CD8-positive, alpha-beta T cell (primary cell): ENCODE measurements at regions of chr19 and their contacts with region 1.

Region 1: DNA sequence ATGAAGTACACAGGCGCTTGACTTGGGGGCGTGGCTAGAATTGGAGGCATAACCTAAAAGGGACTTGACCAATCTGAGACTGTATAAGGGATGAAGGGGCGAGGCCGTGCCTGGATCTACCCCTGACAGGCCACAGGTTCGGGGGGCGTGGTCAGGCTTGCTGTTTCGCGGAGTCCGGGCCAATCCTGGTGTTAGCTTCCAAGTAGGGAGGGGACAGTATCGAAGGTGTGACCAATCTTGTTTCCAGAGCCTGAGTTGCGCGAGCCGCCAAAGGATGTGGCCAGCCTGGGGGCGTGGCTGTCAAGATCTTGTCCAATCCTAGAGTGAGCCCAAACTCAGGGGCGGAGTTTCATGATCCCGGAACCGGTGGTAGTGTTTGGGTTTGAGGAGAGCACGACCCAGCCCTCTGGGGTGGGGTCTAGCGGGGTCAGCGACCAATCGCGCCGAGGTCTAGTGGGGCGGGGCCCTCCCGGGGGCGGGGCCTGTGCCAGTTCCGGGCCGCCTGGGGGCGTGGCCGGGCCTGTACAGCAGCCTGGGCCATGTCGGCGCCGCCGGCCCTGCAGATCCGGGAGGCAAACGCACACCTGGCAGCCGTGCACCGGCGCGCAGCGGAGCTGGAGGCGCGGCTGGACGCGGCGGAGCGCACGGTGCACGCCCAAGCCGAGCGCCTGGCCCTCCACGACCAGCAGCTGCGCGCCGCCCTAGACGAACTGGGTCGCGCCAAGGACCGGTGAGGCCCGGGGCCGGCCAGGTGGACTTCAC is at the start of gene VMAC:
- DNase-seq: peak; percentile 100
- ATAC-seq: peak; percentile 77
- H3K4me3 ChIP-seq: peak within 1 kb of the TSS; percentile 93 to 100
- H3K4me3 Mint-ChIP-seq: peak within 1 kb of the TSS; percentile 90
- H3K27ac ChIP-seq: peak within 1 kb of the TSS; percentile 90 to 92
- H3K27ac Mint-ChIP-seq: peak within 1 kb of the TSS; percentile 99
- H3K4me1 ChIP-seq: peaks cover 22% of the 10 kb centered on the region
- H3K4me1 Mint-ChIP-seq: peaks cover 31% of the 10 kb centered on the region
- H3K27me3 ChIP-seq: no peaks in the 10 kb centered on the region
- H3K27me3 Mint-ChIP-seq: no peaks in the 10 kb centered on the region
- CTCF ChIP-seq: no peak
- total RNA-seq, gene VMAC: 17.4 to 18.6 TPM

Region 2: DNA sequence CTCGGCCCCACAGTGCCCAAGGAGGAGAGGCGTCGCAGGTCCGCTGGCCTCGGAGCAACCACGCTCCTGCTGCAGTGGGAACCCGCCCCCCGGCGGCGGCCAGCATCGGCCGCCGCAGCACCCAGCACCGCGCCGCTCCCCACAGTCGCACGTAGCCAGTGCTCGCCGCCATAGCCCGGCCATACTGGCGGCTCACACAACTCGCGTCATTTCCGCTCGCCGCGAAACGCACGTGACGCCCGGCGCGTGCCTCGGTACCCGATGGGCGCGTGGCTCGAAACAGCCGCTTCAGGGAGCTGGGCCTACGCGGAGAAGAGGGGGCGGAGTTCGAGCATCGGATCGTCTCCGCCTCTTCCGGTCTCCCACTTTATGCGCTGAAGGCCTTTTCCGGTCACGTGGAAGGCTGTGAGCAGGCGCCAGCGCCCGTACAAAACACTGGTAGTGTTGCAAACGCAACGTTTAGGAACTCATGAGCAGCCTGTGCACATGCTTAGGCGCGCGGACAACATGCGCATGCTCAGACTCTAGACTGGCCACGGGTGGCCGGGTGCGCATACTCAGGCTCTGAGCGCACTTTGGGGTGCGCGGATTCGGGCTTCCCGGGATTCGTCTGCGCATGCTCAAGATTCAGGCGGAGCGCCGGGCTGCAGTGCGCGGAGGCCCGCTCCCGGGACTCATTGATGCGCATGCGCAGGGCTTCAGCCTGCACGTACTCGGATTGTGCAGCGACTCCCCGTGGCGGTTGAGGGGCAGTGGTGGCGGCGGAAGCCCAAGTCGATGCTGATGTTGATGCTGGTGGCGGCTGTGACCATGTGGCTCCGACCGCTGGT is 184.4 kb before region 1 on chr19 and contains the starts of genes CATSPERD and LONP1:
- CTCF ChIA-PET with region 1: no interaction called
- POLR2A ChIA-PET with region 1: no interaction called
- intact Hi-C with region 1: loop called in 1 of 2 experiments (anchors 1 kb)
- DNase-seq: peak; percentile 92 to 100 (median 97)
- ATAC-seq: peak; percentile 86
- H3K4me3 ChIP-seq: peak within 1 kb of the TSS; percentile 91 to 94
- H3K4me3 Mint-ChIP-seq: peak within 1 kb of the TSS; percentile 92
- H3K27ac ChIP-seq: peak within 1 kb of the TSS; percentile 93 to 96
- H3K27ac Mint-ChIP-seq: peak within 1 kb of the TSS; percentile 96
- H3K4me1 ChIP-seq: peaks cover 23% of the 10 kb centered on the region
- H3K4me1 Mint-ChIP-seq: peaks cover 29% of the 10 kb centered on the region
- H3K27me3 ChIP-seq: no peaks in the 10 kb centered on the region
- H3K27me3 Mint-ChIP-seq: no peaks in the 10 kb centered on the region
- CTCF ChIP-seq: peak; percentile 89
- total RNA-seq, gene CATSPERD: not detected
- total RNA-seq, gene LONP1: 90.6 to 109 TPM

Region 3: DNA sequence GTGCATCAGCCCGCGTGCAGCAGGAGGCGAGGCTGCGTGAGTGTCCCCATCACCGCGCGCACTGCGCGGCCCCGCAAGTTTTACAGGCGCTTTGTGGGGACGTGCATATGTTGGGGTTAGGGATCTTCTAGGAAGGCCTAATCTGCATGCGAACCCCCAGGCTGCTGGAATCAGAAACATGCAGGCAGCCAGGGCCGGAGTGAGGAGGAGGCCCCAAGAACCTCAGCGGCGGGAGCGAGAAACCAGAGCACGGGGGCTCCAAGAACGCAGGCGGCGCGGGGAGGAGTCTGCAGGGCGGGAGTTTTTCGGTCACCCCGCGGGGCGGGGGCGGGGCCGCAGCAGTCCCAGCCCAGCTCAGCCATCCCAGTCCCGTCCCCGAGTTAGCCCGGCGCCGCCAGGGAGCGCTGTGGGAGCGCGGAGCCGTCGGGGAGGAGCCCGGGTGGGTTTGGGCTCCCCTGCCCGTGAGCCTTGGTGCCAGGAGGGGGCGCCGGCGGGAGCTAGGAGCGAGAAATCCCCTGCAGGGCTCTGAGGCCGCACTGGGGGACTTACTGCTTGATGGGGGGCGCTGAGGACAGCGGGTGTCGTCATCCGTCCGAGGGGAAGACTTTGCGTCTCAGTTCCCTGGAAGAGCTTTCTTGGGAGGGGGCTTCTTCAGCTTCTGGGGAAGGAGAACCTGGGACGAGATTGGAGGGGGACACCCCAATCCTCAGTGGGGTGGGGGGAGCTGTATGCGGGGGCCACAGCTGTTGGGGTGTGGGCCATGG is 100.6 kb before region 1 on chr19:
- CTCF ChIA-PET with region 1: interaction called, 13 read pairs
- POLR2A ChIA-PET with region 1: interaction called, 8 read pairs
- intact Hi-C with region 1: loop called in 1 of 2 experiments (anchors 1 kb)
- DNase-seq: peak; percentile 80 to 96 (median 92)
- ATAC-seq: peak; percentile 97
- H3K4me3 ChIP-seq: peak overlapping the region; percentile 41 to 61
- H3K4me3 Mint-ChIP-seq: peak overlapping the region; percentile 75
- H3K27ac ChIP-seq: no peak overlapping the region
- H3K27ac Mint-ChIP-seq: no peak overlapping the region
- H3K4me1 ChIP-seq: peaks cover 34% of the 10 kb centered on the region
- H3K4me1 Mint-ChIP-seq: peaks cover 23% of the 10 kb centered on the region
- H3K27me3 ChIP-seq: peaks cover 0 to 35% of the 10 kb centered on the region in 2 experiments
- H3K27me3 Mint-ChIP-seq: peaks cover 18% of the 10 kb centered on the region
- CTCF ChIP-seq: peak; percentile 93

Region 4: GRCh38 chr19:5891938-5892771 is 12.4 kb before region 1 on chr19:
- CTCF ChIA-PET with region 1: interaction called, 5 read pairs
- POLR2A ChIA-PET with region 1: interaction called, 16 read pairs
- intact Hi-C with region 1: no loop called
- DNase-seq: peak in 1 of 9 experiments; percentile 37
- ATAC-seq: peak; percentile 40
- H3K4me3 ChIP-seq: no peak overlapping the region
- H3K4me3 Mint-ChIP-seq: no peak overlapping the region
- H3K27ac ChIP-seq: no peak overlapping the region
- H3K27ac Mint-ChIP-seq: no peak overlapping the region
- H3K4me1 ChIP-seq: peaks cover 9% of the 10 kb centered on the region
- H3K4me1 Mint-ChIP-seq: peaks cover 3% of the 10 kb centered on the region
- H3K27me3 ChIP-seq: no peaks in the 10 kb centered on the region
- H3K27me3 Mint-ChIP-seq: peaks cover 9% of the 10 kb centered on the region
- CTCF ChIP-seq: no peak

Region 5: DNA sequence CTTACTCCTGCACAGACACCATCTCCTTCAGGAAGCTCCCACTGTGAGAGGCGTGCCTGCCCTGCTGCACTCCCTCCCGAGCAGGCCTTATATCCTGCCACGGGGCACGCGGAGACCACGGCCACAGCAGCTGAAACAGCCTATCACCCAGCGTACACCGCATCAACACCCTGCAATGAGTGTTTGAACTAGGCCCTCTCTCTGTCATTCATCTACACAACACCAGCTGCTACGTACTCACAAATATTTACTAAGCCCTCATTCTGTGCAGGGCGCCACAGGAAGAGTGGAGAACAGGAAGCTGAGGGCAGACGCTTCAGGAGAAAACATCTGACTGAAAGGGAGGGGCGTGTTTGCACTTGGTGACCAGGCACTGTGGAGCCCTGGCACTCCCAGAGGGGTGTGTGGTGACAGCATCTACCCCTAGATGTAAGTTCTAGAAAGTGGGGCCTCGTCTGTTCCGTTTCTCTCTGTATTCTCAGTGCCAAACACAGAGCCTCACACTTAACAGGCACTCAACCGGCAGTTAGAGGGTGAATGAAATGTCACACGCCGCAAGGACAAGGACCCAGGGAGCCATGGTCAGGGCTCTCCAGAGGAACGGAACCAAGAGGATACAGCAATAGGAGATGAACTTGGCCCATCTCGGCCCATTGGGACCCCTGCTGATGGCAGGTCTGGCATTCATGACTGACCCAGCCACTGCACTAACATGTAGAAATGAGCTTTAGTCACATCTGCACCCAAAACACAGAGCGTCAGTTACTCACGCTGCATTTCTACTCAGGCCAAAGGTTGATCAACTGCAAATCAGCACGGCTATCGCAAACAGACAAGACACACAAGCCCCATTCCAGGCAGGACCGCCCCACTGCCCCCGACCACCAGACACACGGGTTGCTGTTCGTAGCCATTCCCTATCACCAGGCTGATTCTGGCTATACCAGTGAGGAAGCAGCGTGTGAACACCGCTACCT is 57.7 kb after region 1 on chr19:
- CTCF ChIA-PET with region 1: no interaction called
- POLR2A ChIA-PET with region 1: interaction called, 26 read pairs
- intact Hi-C with region 1: loop called (anchors 1 kb)
- DNase-seq: peak; percentile 62 to 93 (median 81)
- ATAC-seq: peak; percentile 92
- H3K4me3 ChIP-seq: peak overlapping the region; percentile 22 to 29
- H3K4me3 Mint-ChIP-seq: peak overlapping the region; percentile 78
- H3K27ac ChIP-seq: peak overlapping the region; percentile 81 to 89
- H3K27ac Mint-ChIP-seq: peak overlapping the region; percentile 100
- H3K4me1 ChIP-seq: peaks cover 96% of the 10 kb centered on the region
- H3K4me1 Mint-ChIP-seq: peaks cover 91% of the 10 kb centered on the region
- H3K27me3 ChIP-seq: no peaks in the 10 kb centered on the region
- H3K27me3 Mint-ChIP-seq: no peaks in the 10 kb centered on the region
- CTCF ChIP-seq: peak; percentile 23

Region 6: GRCh38 chr19:6460101-6460853 is 555.7 kb after region 1 on chr19:
- CTCF ChIA-PET with region 1: no interaction called
- POLR2A ChIA-PET with region 1: no interaction called
- intact Hi-C with region 1: loop called in 1 of 2 experiments (anchors 5 kb)
- DNase-seq: peak; percentile 93 to 98 (median 96)
- ATAC-seq: peak; percentile 85
- H3K4me3 ChIP-seq: peak overlapping the region; percentile 73 to 87
- H3K4me3 Mint-ChIP-seq: peak overlapping the region; percentile 94
- H3K27ac ChIP-seq: peak overlapping the region; percentile 62 to 69
- H3K27ac Mint-ChIP-seq: peak overlapping the region; percentile 81
- H3K4me1 ChIP-seq: peaks cover 20% of the 10 kb centered on the region
- H3K4me1 Mint-ChIP-seq: peaks cover 32% of the 10 kb centered on the region
- H3K27me3 ChIP-seq: peaks cover 0 to 3% of the 10 kb centered on the region in 2 experiments
- H3K27me3 Mint-ChIP-seq: no peaks in the 10 kb centered on the region
- CTCF ChIP-seq: peak; percentile 54